H1 (cell line): ENCODE measurements at regions of chr20 and their contacts with region 1.

Region 1: DNA sequence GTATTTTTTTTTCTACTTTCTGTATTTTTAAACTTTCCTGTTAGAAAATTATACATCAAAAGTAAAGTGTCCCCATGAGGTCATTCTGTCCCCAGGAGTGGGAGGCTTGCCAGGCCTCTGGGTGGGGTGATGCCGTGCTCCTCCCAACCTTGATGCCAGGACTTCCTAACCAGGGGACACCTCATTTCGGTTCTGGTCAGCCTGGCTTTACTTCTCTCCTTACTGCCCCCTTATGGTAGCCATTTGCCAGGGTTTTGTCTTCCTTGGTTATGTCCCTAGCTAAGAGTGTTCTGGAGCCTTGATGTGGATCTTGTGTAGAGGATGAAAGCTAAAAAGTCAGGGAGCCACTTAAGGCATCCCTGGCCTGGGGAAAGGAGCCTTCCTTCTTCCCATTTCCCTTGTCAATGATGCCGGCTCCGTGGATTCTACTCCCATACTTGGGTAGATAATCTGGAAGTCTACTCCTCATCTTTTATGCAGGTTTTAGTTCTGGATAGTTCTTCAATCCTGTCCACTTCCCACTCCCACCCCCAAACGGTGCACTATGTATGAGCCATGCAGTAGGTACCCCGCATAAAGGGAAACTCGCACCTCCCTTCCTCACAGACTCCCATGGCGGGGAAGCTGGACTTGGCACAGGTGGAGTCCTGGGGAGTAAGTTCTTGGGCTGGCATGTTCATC is 164.1 kb upstream of the SALL4 start:
- DNase-seq: peak; percentile 68 to 75
- H3K4me3 ChIP-seq: no peak overlapping the region
- H3K27ac ChIP-seq: no peak overlapping the region
- H3K4me1 ChIP-seq: peaks cover 4 to 10% (median 6%) of the 10 kb centered on the region in 4 experiments; a peak in 6 of 7 replicates
- H3K27me3 ChIP-seq: peaks cover 0 to 2% (median 0%) of the 10 kb centered on the region in 4 experiments; a peak in 1 of 7 replicates
- CTCF ChIP-seq: peak; percentile 48 to 90 (median 81)
- EP300 ChIP-seq: no peak
- POLR2A ChIP-seq: no peak
- RAD21 ChIP-seq: peak; percentile 77 to 89

Region 2: GRCh38 chr20:51953731-51954340 is 12.6 kb before region 1 on chr20:
- CTCF ChIA-PET with region 1: interaction called, 14 read pairs
- POLR2A ChIA-PET with region 1: no interaction called
- DNase-seq: no peak
- H3K4me3 ChIP-seq: no peak overlapping the region
- H3K27ac ChIP-seq: no peak overlapping the region
- H3K4me1 ChIP-seq: peaks cover 0 to 9% (median 2%) of the 10 kb centered on the region in 4 experiments; a peak in 4 of 7 replicates
- H3K27me3 ChIP-seq: no peaks in the 10 kb centered on the region
- CTCF ChIP-seq: no peak
- EP300 ChIP-seq: no peak
- POLR2A ChIP-seq: no peak
- RAD21 ChIP-seq: no peak

Region 3: GRCh38 chr20:51978081-51978501 is 11.7 kb after region 1 on chr20:
- CTCF ChIA-PET with region 1: interaction called, 36 read pairs
- POLR2A ChIA-PET with region 1: no interaction called
- DNase-seq: no peak
- H3K4me3 ChIP-seq: no peak overlapping the region
- H3K27ac ChIP-seq: no peak overlapping the region
- H3K4me1 ChIP-seq: no peaks in the 10 kb centered on the region
- H3K27me3 ChIP-seq: no peaks in the 10 kb centered on the region
- CTCF ChIP-seq: no peak
- EP300 ChIP-seq: no peak
- POLR2A ChIP-seq: no peak
- RAD21 ChIP-seq: no peak

Region 4: GRCh38 chr20:52060794-52061714 is 94.6 kb after region 1 on chr20:
- CTCF ChIA-PET with region 1: interaction called, 15 read pairs
- POLR2A ChIA-PET with region 1: no interaction called
- DNase-seq: no peak
- H3K4me3 ChIP-seq: no peak overlapping the region
- H3K27ac ChIP-seq: no peak overlapping the region
- H3K4me1 ChIP-seq: peaks cover 0 to 3% (median under 1%) of the 10 kb centered on the region in 4 experiments; a peak in 2 of 7 replicates
- H3K27me3 ChIP-seq: no peaks in the 10 kb centered on the region
- CTCF ChIP-seq: peak; percentile 63 to 82 (median 76)
- EP300 ChIP-seq: no peak
- POLR2A ChIP-seq: no peak
- RAD21 ChIP-seq: peak; percentile 91 to 94